B cell (primary cell): ENCODE measurements at regions of chr11 and their contacts with region 1.

Region 1: GRCh38 chr11:63838678-63839507 is at the start of gene MARK2:
- DNase-seq: peak; percentile 100
- ATAC-seq: peak; percentile 82
- H3K4me3 ChIP-seq: peak within 1 kb of the TSS; percentile 67 to 94 (median 90)
- H3K4me3 Mint-ChIP-seq: peak within 1 kb of the TSS; percentile 91
- H3K27ac ChIP-seq: peak within 1 kb of the TSS; percentile 82 to 91
- H3K27ac Mint-ChIP-seq: peak within 1 kb of the TSS; percentile 94
- H3K4me1 ChIP-seq: peaks cover 38 to 46% of the 10 kb centered on the region in 2 donors
- H3K4me1 Mint-ChIP-seq: peaks cover 59% of the 10 kb centered on the region
- H3K27me3 ChIP-seq: no peaks in the 10 kb centered on the region
- H3K27me3 Mint-ChIP-seq: no peaks in the 10 kb centered on the region
- CTCF ChIP-seq: no peak
- total RNA-seq, gene MARK2: 55.9 and 58.1 TPM in 2 replicates

Region 2: GRCh38 chr11:63681321-63682049 is 157.4 kb before region 1 on chr11 and contains the start of gene RTN3:
- CTCF ChIA-PET with region 1: interaction called, 4 read pairs
- POLR2A ChIA-PET with region 1: no interaction called
- intact Hi-C with region 1: loop called (anchors 2 kb)
- DNase-seq: peak; percentile 99
- ATAC-seq: peak; percentile 92
- H3K4me3 ChIP-seq: peak within 1 kb of the TSS; percentile 75 to 98 (median 90)
- H3K4me3 Mint-ChIP-seq: peak within 1 kb of the TSS; percentile 95
- H3K27ac ChIP-seq: peak within 1 kb of the TSS; percentile 83 to 84
- H3K27ac Mint-ChIP-seq: peak within 1 kb of the TSS; percentile 97
- H3K4me1 ChIP-seq: peaks cover 15 to 16% of the 10 kb centered on the region in 2 donors
- H3K4me1 Mint-ChIP-seq: peaks cover 27% of the 10 kb centered on the region
- H3K27me3 ChIP-seq: no peaks in the 10 kb centered on the region
- H3K27me3 Mint-ChIP-seq: peaks cover 6% of the 10 kb centered on the region
- CTCF ChIP-seq: no peak
- total RNA-seq, gene RTN3: 20.1 and 24.9 TPM in 2 replicates

Region 3: GRCh38 chr11:63888170-63889086 is 49.5 kb after region 1 on chr11:
- CTCF ChIA-PET with region 1: interaction called, 8 read pairs
- POLR2A ChIA-PET with region 1: interaction called, 7 read pairs
- intact Hi-C with region 1: loop called (anchors 1 kb)
- DNase-seq: peak; percentile 83
- ATAC-seq: peak; percentile 89
- H3K4me3 ChIP-seq: peak overlapping the region; percentile 36 to 88 (median 68)
- H3K4me3 Mint-ChIP-seq: peak overlapping the region; percentile 93
- H3K27ac ChIP-seq: peak overlapping the region; percentile 67 to 82
- H3K27ac Mint-ChIP-seq: peak overlapping the region; percentile 87
- H3K4me1 ChIP-seq: peaks cover 39 to 53% of the 10 kb centered on the region in 2 donors
- H3K4me1 Mint-ChIP-seq: peaks cover 72% of the 10 kb centered on the region
- H3K27me3 ChIP-seq: no peaks in the 10 kb centered on the region
- H3K27me3 Mint-ChIP-seq: no peaks in the 10 kb centered on the region
- CTCF ChIP-seq: no peak

Region 4: GRCh38 chr11:63938479-63939396 is 99.8 kb after region 1 on chr11 and contains the start of gene NAA40:
- CTCF ChIA-PET with region 1: interaction called, 254 read pairs
- POLR2A ChIA-PET with region 1: interaction called, 9 read pairs
- intact Hi-C with region 1: loop called (anchors 1 kb)
- DNase-seq: peak; percentile 98
- ATAC-seq: peak; percentile 87
- H3K4me3 ChIP-seq: peak within 1 kb of the TSS; percentile 65 to 98 (median 72)
- H3K4me3 Mint-ChIP-seq: peak within 1 kb of the TSS; percentile 88
- H3K27ac ChIP-seq: peak within 1 kb of the TSS; percentile 55 to 72
- H3K27ac Mint-ChIP-seq: peak within 1 kb of the TSS; percentile 82
- H3K4me1 ChIP-seq: peaks cover 27 to 35% of the 10 kb centered on the region in 2 donors
- H3K4me1 Mint-ChIP-seq: peaks cover 32% of the 10 kb centered on the region
- H3K27me3 ChIP-seq: no peaks in the 10 kb centered on the region
- H3K27me3 Mint-ChIP-seq: no peaks in the 10 kb centered on the region
- CTCF ChIP-seq: no peak
- total RNA-seq, gene NAA40: 41.3 and 52.1 TPM in 2 replicates

Region 5: DNA sequence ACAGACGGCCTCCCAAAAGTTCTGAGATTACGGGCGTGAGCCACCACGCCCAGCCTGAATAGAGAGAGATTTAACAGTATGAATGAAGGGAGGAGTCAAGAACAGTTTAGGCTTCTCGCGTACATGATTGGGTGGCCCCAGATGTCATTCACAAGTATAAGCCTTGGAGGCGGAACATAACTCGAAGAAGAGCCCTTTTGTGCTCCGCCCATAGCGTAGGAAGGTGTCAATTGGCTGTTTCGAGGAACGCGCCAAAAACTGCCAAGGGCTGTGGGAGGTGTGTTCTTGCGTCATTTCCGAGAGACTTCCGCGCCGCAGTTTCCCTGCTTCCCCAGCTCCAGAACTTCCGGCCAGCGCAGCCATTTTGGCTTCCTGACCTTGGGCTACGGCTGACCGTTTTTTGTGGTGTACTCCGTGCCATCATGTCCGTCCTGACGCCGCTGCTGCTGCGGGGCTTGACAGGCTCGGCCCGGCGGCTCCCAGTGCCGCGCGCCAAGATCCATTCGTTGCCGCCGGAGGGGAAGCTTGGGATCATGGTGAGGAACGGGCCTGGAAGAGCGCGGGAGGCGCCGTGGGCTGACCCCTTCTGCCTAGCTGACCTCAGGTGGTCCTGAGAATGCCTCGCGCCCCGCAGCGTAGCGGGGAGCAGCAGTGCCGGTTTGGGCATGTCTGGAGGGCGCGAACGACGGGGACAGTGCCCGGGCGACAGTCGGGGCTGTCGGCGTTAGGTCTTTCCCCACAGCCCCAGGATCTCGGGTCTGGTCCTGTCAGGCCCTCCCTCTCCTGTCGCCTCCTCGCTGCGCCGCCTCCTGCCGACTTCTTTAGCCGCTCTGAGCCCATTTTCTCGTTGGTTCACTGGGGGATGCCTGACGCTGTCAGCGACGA is 135.6 kb after region 1 on chr11 and contains the start of gene COX8A:
- CTCF ChIA-PET with region 1: interaction called, 4 read pairs
- POLR2A ChIA-PET with region 1: no interaction called
- intact Hi-C with region 1: loop called (anchors 1 kb)
- DNase-seq: peak; percentile 98
- ATAC-seq: peak; percentile 98
- H3K4me3 ChIP-seq: peak within 1 kb of the TSS; percentile 81 to 99 (median 94)
- H3K4me3 Mint-ChIP-seq: peak within 1 kb of the TSS; percentile 99
- H3K27ac ChIP-seq: peak within 1 kb of the TSS; percentile 83 to 94
- H3K27ac Mint-ChIP-seq: peak within 1 kb of the TSS; percentile 98
- H3K4me1 ChIP-seq: peaks cover 6 to 21% of the 10 kb centered on the region in 2 donors
- H3K4me1 Mint-ChIP-seq: peaks cover 29% of the 10 kb centered on the region
- H3K27me3 ChIP-seq: no peaks in the 10 kb centered on the region
- H3K27me3 Mint-ChIP-seq: peaks cover 3% of the 10 kb centered on the region
- CTCF ChIP-seq: no peak
- total RNA-seq, gene COX8A: 92.6 and 99.0 TPM in 2 replicates

Region 6: DNA sequence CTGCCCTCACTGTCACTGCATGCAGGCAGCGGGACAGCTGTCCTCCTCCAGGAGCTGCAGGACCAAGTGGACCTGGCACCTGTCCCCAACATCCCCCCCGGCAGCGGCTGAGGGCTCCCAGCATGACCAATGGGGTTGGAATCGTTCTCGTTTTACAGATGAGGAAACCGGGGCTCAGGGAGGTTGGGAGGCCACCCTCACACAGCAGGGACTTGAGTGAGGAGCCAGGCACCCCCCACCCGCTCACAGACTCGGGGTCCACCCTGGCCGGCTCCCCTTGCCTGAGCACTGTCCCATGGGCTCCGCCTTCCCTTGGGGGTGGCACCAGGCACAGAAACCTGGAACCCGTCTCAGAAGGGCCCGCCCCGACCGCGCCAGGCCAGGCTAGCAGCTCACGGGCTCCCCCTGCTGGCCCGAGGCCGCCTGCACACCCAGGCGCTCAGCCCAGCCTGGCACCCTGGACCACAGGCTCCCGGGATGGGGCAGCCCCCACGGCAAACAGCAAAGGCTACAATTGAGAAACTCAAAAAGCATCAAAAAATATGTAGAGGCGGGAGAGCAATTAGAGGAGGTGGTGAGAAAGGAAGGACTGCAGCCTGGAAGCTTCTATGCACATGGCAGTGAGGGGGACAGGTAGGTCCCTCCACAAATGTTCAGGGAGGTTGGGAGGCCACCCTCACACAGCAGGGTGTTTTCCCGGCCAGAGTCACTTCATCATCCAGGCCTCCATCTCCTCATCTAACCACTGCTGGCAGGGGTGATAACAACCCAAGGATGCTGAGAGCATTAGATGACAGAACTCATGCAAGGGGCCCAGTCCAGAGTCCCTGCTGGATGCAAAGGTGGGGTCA is 314.2 kb after region 1 on chr11:
- CTCF ChIA-PET with region 1: interaction called, 163 read pairs
- POLR2A ChIA-PET with region 1: no interaction called
- intact Hi-C with region 1: loop called (anchors 1 kb)
- DNase-seq: peak; percentile 79
- ATAC-seq: peak; percentile 97
- H3K4me3 ChIP-seq: no peak overlapping the region
- H3K4me3 Mint-ChIP-seq: no peak overlapping the region
- H3K27ac ChIP-seq: no peak overlapping the region
- H3K27ac Mint-ChIP-seq: no peak overlapping the region
- H3K4me1 ChIP-seq: peaks cover 0 to 12% of the 10 kb centered on the region in 2 donors
- H3K4me1 Mint-ChIP-seq: peaks cover 2% of the 10 kb centered on the region
- H3K27me3 ChIP-seq: no peaks in the 10 kb centered on the region
- H3K27me3 Mint-ChIP-seq: no peaks in the 10 kb centered on the region
- CTCF ChIP-seq: peak; percentile 99

Region 7: DNA sequence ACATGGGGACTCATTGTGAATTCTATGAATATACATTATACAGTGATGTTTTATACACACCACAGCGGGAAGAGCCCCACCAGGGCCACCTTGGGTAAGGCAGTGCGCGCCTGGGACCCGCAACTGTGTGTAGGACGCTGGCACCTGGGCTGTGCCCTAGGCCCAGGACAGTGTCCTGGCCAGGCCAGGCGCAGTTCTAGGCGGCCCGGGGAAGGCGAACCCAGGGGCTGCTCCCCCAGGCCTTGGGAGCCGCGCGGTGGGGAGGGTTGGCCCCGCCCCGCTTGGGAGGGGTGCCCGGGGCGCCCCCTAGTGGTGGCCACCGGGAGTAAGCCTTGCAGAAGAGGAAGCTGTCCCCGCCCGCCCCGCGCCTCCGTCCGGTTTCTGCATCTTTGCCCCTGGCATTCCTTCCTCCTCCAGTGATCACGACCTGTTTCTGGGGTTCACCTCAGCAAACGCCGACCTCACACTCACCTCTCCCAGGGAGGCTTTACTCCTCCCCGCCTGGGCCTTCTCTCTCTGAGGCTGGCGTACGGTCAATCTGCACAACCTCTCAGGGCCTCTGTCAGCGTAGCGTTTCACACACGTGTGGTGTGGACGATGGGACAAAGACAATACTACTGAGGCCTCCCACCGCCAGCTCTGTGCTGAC is 1049.0 kb after region 1 on chr11:
- CTCF ChIA-PET with region 1: no interaction called
- POLR2A ChIA-PET with region 1: interaction called, 10 read pairs
- intact Hi-C with region 1: no loop called
- DNase-seq: peak; percentile 90
- ATAC-seq: peak; percentile 97
- H3K4me3 ChIP-seq: peak overlapping the region in 4 of 5 experiments; percentile 14 to 50 (median 42)
- H3K4me3 Mint-ChIP-seq: peak overlapping the region; percentile 84
- H3K27ac ChIP-seq: peak overlapping the region; percentile 43 to 56
- H3K27ac Mint-ChIP-seq: peak overlapping the region; percentile 88
- H3K4me1 ChIP-seq: peaks cover 25 to 33% of the 10 kb centered on the region in 2 donors
- H3K4me1 Mint-ChIP-seq: peaks cover 34% of the 10 kb centered on the region
- H3K27me3 ChIP-seq: no peaks in the 10 kb centered on the region
- H3K27me3 Mint-ChIP-seq: no peaks in the 10 kb centered on the region
- CTCF ChIP-seq: peak; percentile 91